HepG2 (cell line): ENCODE measurements at regions of chr7 and their contacts with region 1.

Region 1: GRCh38 chr7:141114029-141114671 is 40.3 kb downstream of the TMEM178B start:
- DNase-seq: no peak
- ATAC-seq: no peak
- H3K4me3 ChIP-seq: no peak overlapping the region
- H3K27ac ChIP-seq: no peak overlapping the region
- H3K4me1 ChIP-seq: no peaks in the 10 kb centered on the region
- H3K27me3 ChIP-seq: no peaks in the 10 kb centered on the region
- CTCF ChIP-seq: no peak
- EP300 ChIP-seq: no peak
- POLR2A ChIP-seq: no peak
- RAD21 ChIP-seq: no peak

Region 2: DNA sequence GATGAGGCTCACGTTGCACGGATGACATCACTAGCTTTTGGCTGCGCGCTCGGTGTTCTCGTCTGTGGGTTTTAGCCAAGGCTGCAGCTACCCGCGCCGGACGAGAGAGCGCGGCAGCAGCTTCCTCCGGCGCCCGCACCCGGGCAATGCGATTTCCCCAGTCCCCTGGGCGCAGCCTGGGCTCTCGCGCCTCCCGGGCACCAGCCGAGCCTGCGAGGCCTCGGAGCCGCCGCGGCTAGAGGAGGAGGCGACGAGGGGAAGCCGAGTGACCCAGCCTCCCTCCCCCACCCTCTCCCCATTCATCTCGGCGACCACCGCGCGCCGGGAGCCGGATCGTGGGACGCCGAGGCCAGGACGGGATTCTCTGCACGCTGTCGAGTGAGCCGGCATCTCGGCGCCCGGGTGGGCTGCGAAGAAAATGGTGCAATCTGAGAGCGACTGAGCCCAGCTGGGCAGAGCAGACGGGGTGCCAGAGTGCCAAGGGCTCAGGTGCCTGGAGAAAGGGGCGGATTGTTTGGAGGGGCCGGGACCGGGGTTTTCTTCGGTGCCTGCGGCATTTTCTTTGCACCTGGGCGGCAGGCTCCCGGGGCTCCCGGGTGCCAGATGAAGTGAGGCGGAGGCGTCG is 41.5 kb before region 1 on chr7:
- CTCF ChIA-PET with region 1: no interaction called
- POLR2A ChIA-PET with region 1: no interaction called
- in situ Hi-C with region 1: no loop called
- intact Hi-C with region 1: loop called (anchors 1 kb)
- DNase-seq: no peak
- ATAC-seq: peak; percentile 63
- H3K4me3 ChIP-seq: peak overlapping the region in 2 of 3 experiments; percentile 9 to 57; a peak in 3 of 6 replicates
- H3K27ac ChIP-seq: no peak overlapping the region
- H3K4me1 ChIP-seq: peaks cover 15% of the 10 kb centered on the region; the same call in 1 of the 2 replicates
- H3K27me3 ChIP-seq: peaks cover 9 to 64% of the 10 kb centered on the region in 2 experiments; a peak in 4 of 5 replicates
- CTCF ChIP-seq: no peak
- EP300 ChIP-seq: no peak
- POLR2A ChIP-seq: no peak
- RAD21 ChIP-seq: no peak